Motor neuron (in vitro differentiated cells): ENCODE measurements at regions of chr17 and their contacts with region 1.

Region 1: GRCh38 chr17:76278952-76279741 is 14.0 kb downstream of the UBALD2 start:
- ATAC-seq: peak; percentile 76 to 96 (median 92)
- H3K4me3 ChIP-seq: no peak overlapping the region
- H3K27ac ChIP-seq: no peak overlapping the region
- H3K4me1 ChIP-seq: no peaks in the 10 kb centered on the region

Region 2: DNA sequence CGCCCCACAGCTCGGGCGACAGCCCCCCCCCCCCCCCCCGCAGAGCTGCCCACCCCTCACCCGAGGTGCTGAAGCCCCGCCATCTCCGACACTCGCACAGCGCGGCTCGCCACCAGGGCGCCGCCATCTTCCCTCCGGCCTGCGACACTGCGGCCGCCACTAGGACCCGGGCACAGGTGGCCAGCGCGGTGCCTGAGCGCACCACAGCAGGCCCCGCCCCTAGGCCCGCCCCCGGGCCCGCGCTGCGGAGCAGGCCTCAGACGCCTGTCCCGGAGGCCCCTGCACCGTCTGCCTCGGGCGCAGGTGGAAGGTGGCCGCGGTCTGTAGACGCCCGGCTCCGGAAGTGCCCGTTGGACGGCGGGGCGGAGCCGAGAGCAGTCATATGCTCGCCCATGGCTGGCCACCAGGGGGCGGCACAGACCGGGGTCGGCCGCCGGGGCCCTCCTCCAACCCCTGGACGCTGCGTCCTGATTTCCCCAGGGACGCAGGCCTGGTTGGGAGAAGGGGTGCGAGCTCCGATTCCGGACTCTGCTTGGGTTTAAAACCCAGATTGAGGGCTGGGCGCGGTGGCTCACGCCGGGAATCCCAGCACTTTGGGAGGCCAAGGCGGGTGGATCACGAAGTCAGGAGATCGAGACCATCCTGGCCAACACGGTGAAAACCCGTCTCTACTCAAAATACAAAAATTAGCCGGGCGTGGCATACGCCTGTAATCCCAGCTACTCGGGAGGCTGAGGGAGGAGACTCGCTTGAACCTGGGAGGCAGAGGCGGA is 374.2 kb before region 1 on chr17 and contains the start of gene MRPL38:
- in situ Hi-C with region 1: loop called in 1 of 9 experiments (anchors 25 kb)
- ATAC-seq: peak; percentile 88 to 97 (median 97)
- H3K4me3 ChIP-seq: peak within 1 kb of the TSS; percentile 58 to 93 (median 69)
- H3K27ac ChIP-seq: peak within 1 kb of the TSS; percentile 54 to 76
- H3K4me1 ChIP-seq: peaks cover 9 to 11% of the 10 kb centered on the region in 2 donors
- total RNA-seq, gene MRPL38: 31.1 to 77.0 (median 47.0) TPM

Region 3: GRCh38 chr17:76014184-76014924 is 264.8 kb before region 1 on chr17:
- in situ Hi-C with region 1: loop called in 4 of 9 experiments (anchors 25 kb)
- ATAC-seq: peak; percentile 89 to 100 (median 93)
- H3K4me3 ChIP-seq: no peak overlapping the region
- H3K27ac ChIP-seq: no peak overlapping the region
- H3K4me1 ChIP-seq: peaks cover 0 to 4% of the 10 kb centered on the region in 2 donors

Region 4: DNA sequence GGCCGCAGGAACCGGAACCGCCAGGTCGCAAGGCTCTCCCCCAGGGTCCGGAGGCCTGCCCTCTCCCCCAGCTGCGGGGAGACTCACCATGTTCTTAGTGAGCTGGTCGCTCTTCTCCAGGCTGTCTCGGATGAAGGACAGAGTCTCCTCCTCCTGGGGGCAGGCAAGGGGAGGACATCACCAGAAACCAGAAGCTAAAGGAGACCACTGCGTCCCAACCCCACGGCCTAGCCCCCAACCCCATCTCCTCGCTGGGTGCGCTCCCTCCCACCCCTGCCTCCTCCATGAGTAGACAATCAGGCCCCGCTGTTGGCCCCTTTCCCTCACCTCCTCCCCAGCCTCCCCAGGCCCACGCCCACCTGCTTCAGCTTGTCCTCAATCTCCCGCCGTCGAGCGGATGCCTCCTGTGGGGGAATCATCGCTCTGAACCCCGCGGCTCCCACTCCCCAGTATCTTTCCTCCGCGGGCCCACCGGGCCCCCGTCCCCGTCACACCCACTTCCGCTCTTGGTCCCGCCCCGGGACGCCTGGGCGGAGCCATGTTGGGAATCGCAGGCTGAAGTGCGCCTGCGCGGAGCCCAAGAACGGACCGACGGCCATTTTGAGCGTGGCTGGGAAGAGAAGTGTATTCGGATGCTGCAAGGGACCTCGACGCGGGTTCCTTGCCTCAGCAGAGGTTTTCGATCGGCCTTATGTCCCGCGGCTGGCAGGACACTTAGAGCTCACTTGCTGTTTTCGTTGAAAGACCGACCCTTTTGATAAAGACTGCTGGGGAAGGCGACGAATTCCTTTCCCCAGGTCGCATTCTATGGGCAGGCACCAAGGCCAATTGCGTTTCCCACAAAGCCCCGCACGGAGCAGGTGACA is 175.6 kb before region 1 on chr17 and contains the start of gene EXOC7:
- in situ Hi-C with region 1: loop called in 7 of 9 experiments (anchors 25 kb)
- ATAC-seq: peak; percentile 79 to 95 (median 90)
- H3K4me3 ChIP-seq: peak within 1 kb of the TSS; percentile 50 to 86 (median 71)
- H3K27ac ChIP-seq: peak within 1 kb of the TSS; percentile 94 to 95
- H3K4me1 ChIP-seq: peaks cover 10 to 12% of the 10 kb centered on the region in 2 donors
- total RNA-seq, gene EXOC7: 39.6 to 105 (median 64.7) TPM

Region 5: DNA sequence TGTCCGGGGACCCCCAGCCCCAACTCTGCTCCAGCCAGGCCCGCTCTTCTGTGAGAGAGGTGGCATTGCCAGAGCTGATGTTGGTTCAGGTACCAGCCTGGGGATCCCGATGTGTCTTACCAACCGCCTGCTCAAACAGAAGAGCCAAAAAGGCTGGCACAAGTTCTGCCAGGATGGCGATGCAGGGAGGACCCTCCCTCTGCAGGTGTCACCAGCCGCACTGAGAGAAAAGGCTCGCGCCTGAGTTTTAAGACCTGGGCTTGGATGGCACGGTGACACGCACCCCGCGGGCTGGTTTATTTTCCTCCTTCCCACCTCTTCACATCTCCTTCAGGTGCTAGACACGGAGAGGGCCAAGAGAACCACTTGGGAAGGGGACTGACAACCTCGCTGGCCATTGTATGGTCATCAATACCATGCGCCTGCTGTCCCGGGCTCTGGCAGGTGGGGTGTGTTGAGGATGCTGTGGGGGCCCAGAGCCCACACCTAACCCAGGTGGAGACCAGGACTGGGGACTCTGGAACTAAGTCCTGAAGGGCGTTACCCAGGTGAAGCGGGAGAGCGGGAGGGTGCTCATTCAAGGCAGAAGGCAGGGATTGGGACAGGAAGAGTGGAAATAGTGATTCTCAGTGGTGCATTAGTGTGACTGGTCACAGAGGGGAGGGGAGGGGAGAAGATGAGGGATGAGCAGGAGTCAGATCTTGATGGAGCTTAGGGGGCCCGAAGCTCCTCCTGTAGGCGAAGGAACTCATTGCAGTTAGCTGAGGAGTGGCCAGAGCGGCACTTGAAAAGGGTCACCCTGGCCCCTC is 154.4 kb before region 1 on chr17:
- in situ Hi-C with region 1: loop called in 8 of 9 experiments (anchors 5 to 25 kb)
- ATAC-seq: peak in 1 of 8 experiments; percentile 24
- H3K4me3 ChIP-seq: no peak overlapping the region
- H3K27ac ChIP-seq: no peak overlapping the region
- H3K4me1 ChIP-seq: peaks cover 0 to 12% of the 10 kb centered on the region in 2 donors

Region 6: GRCh38 chr17:76191896-76192295 is 87.3 kb before region 1 on chr17:
- in situ Hi-C with region 1: no loop called
- ATAC-seq: no peak
- H3K4me3 ChIP-seq: no peak overlapping the region
- H3K27ac ChIP-seq: no peak overlapping the region
- H3K4me1 ChIP-seq: peaks cover 0 to 17% of the 10 kb centered on the region in 2 donors